ENCODE measurements at regions of chrX and their contacts with region 1.

Region 1: GRCh38 chrX:16719334-16720084 is at the start of gene SYAP1:
- DNase-seq: peak; percentile 94
- H3K4me3 Mint-ChIP-seq: peak within 1 kb of the TSS; percentile 92
- H3K27ac Mint-ChIP-seq: peak within 1 kb of the TSS; percentile 89
- H3K4me1 Mint-ChIP-seq: peaks cover 18% of the 10 kb centered on the region
- H3K27me3 Mint-ChIP-seq: no peaks in the 10 kb centered on the region
- total RNA-seq, gene SYAP1: 20.8 to 22.4 TPM

Region 2: DNA sequence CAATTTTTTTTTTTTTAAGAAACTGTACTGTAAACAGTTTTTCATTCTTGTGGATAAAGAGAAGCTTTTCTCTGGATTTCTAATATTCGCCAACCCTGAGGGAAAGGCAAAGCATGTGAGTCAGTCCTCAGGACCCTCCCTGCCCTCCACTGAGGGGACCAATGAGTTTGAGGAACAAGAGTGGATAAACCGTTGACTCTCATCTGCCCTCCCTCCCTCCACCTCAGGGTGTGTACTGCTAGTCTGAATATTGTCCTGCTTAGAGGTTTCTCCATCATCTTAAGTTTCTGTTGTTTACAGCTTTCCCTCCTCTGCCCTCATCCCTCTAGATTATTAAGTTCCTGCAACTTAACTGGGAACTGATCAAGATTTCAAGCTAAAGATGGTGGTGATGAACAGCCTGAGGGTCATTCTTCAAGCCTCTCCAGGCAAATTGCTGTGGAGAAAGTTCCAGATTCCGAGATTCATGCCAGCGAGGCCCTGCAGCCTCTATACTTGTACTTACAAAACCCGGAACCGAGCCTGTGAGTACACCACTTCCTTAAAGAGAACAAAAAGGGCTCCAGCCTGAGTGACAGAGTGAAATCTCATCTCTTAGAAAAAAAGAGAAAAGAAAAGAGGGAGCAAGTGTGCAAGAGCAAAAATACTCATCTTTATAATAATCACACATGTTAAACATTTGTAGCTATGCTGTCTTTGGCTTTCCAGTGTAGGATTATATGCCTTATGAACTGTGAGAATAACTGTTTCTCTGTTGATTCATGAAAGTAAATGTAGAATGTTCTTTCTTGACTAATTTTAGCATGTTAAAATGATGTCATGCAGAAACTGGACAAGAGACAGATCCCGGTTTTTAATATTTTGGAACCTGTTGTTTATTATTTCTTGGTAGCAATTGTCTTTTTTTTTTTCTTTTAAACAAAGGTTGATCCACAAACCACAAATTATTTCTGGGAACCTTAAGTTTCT is 969.6 kb before region 1 on chrX:
- CTCF ChIA-PET with region 1: no interaction called
- POLR2A ChIA-PET with region 1: no interaction called
- intact Hi-C with region 1: loop called (anchors 10 kb)
- DNase-seq: peak; percentile 35
- H3K4me3 Mint-ChIP-seq: peak overlapping the region; percentile 53
- H3K27ac Mint-ChIP-seq: peak overlapping the region; percentile 94
- H3K4me1 Mint-ChIP-seq: peaks cover 67% of the 10 kb centered on the region
- H3K27me3 Mint-ChIP-seq: no peaks in the 10 kb centered on the region

Region 3: DNA sequence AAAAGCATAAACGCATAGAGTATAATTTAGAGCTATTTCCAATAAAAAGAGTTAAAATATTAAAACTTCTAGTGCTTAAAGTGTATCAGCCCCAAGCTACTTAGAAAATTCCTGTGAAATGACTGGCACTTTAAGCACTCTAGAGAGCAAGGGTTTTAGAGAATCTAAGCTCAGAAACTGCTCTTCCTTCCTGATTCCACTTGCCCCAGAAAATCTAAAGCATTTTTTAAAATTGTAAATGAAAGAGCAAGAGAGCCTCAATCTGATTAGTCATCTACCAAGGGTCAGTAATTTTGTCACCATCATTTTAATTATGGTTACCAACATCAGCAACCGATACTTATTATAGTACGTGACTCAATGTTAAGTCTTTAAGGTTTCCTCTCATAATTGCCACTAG is 32.0 kb before region 1 on chrX:
- CTCF ChIA-PET with region 1: no interaction called
- POLR2A ChIA-PET with region 1: no interaction called
- intact Hi-C with region 1: no loop called
- DNase-seq: no peak
- H3K4me3 Mint-ChIP-seq: no peak overlapping the region
- H3K27ac Mint-ChIP-seq: no peak overlapping the region
- H3K4me1 Mint-ChIP-seq: no peaks in the 10 kb centered on the region
- H3K27me3 Mint-ChIP-seq: no peaks in the 10 kb centered on the region

Region 4: GRCh38 chrX:16786139-16786790 is 66.8 kb after region 1 on chrX and contains the start of gene TXLNG:
- CTCF ChIA-PET with region 1: interaction called, 3 read pairs
- POLR2A ChIA-PET with region 1: no interaction called
- intact Hi-C with region 1: loop called (anchors 1 kb)
- DNase-seq: peak; percentile 96
- H3K4me3 Mint-ChIP-seq: peak within 1 kb of the TSS; percentile 86
- H3K27ac Mint-ChIP-seq: peak within 1 kb of the TSS; percentile 77
- H3K4me1 Mint-ChIP-seq: peaks cover 10% of the 10 kb centered on the region
- H3K27me3 Mint-ChIP-seq: no peaks in the 10 kb centered on the region
- total RNA-seq, gene TXLNG: 14.2 to 15.1 TPM

Measured in activated CD4-positive, alpha-beta memory T cell treated with anti-CD3 and anti-CD28 coated beads for 36 hours (primary cell).